ENCODE measurements at regions of chr1 and their contacts with region 1.

Region 1: GRCh38 chr1:206663832-206664652 is 20.7 kb upstream of the MAPKAPK2 start:
- DNase-seq: no peak
- H3K4me3 ChIP-seq: no peak overlapping the region
- H3K27me3 ChIP-seq: peaks cover 15% of the 10 kb centered on the region
- CTCF ChIP-seq: peak; percentile 73

Region 2: DNA sequence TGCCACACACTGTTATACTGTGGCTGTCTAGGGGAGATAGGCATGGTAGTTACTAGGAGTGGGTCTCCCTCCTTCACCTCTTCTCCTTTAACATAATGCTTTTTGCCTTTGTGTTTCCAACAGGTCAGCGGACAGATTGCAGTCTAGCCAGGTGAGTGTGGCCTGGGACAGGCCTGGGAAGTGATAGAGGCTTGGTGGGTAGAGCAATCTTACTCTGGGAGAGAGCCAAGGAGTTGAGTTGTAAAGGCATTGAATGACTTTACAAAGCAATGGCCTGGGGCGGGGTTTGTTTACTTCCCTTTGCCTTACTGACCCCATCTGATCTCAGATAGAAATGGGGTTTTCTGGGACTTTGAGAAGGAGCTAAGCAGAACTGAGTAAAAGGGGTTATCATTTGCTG is 244.8 kb before region 1 on chr1:
- CTCF ChIA-PET with region 1: no interaction called
- POLR2A ChIA-PET with region 1: no interaction called
- DNase-seq: no peak
- H3K4me3 ChIP-seq: no peak overlapping the region
- H3K27me3 ChIP-seq: no peaks in the 10 kb centered on the region
- CTCF ChIP-seq: no peak

Region 3: GRCh38 chr1:206544562-206545257 is 119.3 kb before region 1 on chr1:
- CTCF ChIA-PET with region 1: interaction called, 10 read pairs
- POLR2A ChIA-PET with region 1: no interaction called
- DNase-seq: no peak
- H3K4me3 ChIP-seq: no peak overlapping the region
- H3K27me3 ChIP-seq: peaks cover 3% of the 10 kb centered on the region; the same call in 1 of the 2 replicates
- CTCF ChIP-seq: peak; percentile 94

Region 4: DNA sequence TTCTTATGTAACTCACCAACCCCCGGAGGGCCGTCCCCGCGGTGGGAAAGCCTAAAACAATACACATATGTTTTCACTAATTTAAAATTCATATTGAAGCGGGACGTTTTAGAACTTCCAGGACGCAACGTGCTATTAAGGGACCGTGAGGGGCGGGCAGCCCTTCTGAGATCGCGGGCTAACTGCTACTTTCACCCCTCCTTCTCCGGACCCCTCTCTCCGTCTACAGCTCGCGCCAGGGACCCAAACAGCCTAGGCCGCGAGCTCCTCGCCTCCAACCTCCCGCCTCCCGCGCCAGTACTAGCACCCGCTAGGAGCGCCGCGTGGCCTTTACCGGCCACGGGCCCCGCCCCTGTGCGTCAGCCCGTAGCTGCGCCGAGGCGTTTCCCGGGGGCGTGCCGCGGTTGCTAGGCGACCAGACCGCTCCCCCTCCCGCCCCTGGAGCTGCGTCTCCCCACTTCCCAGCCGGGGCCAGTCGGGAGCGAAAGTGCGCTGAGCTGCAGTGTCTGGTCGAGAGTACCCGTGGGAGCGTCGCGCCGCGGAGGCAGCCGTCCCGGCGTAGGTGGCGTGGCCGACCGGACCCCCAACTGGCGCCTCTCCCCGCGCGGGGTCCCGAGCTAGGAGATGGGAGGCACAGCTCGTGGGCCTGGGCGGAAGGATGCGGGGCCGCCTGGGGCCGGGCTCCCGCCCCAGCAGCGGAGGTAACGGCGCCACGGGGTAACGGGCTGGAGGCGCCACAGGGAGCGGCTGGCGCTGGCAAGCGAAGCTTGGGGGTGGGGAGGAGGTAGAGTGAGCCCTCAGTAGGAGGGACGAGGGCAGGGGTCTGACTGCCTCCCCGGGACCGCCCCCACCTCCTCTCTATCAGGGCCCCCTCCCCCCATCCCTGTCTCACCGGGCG is 28.7 kb before region 1 on chr1 and contains the start of gene DYRK3:
- CTCF ChIA-PET with region 1: interaction called, 130 read pairs
- POLR2A ChIA-PET with region 1: no interaction called
- DNase-seq: peak; percentile 46
- H3K4me3 ChIP-seq: peak within 1 kb of the TSS; percentile 83
- H3K27me3 ChIP-seq: no peaks in the 10 kb centered on the region
- CTCF ChIP-seq: 0 out of 2 replicates have a peak, but pooled peaks have one; percentile 13
- polyA plus RNA-seq, gene DYRK3: 7.4 and 10.8 TPM in 2 replicates

Region 5: GRCh38 chr1:206684478-206685333 is 20.7 kb after region 1 on chr1 and contains the start of gene MAPKAPK2:
- CTCF ChIA-PET with region 1: interaction called, 14 read pairs
- POLR2A ChIA-PET with region 1: interaction called, 3 read pairs
- DNase-seq: no peak
- H3K4me3 ChIP-seq: peak within 1 kb of the TSS; percentile 81
- H3K27me3 ChIP-seq: peaks cover 2% of the 10 kb centered on the region; the same call in 1 of the 2 replicates
- CTCF ChIP-seq: no peak
- polyA plus RNA-seq, gene MAPKAPK2: 65.6 and 80.1 TPM in 2 replicates

Region 6: DNA sequence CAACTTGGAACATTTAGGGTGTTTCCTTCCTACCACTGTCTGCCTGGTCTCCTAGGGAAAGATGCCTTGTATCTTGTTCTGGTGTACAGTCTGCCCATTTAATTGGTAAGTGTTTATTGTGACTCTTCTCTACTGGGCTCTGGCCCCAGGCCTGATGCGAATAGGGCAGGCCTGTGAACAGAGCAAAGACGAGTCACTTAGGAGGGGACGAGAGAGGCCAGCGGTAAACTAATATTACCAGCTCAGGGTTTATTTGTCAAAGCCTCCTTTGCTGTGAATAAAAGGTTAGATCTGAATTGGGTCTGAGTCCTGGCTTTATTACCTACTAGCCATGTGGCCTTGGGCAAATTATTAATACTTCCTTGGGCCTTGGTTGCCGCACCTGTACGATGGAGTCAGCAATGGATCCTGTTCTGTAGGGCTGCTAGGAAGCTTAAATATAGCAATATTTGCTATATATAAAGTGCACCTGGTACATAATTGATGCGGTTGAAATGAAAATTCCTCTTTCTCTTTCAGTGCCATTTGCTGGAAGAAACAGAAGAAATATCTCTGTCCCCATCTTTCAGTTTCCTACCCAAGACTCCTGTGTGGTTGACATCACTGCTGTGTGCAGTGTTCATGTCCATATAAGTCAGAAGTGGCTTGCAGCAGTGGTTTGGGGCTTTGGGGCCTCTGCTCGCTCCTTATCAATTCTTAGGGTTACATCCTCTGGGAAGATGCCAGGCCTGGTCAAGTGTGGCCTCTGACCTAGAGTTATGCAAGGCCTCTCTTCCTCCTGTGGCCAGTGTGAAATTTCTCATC is 53.0 kb after region 1 on chr1:
- CTCF ChIA-PET with region 1: interaction called, 13 read pairs
- POLR2A ChIA-PET with region 1: no interaction called
- DNase-seq: no peak
- H3K4me3 ChIP-seq: no peak overlapping the region
- H3K27me3 ChIP-seq: no peaks in the 10 kb centered on the region
- CTCF ChIP-seq: no peak